ENCODE measurements at regions of chr19 and their contacts with region 1.

Region 1: DNA sequence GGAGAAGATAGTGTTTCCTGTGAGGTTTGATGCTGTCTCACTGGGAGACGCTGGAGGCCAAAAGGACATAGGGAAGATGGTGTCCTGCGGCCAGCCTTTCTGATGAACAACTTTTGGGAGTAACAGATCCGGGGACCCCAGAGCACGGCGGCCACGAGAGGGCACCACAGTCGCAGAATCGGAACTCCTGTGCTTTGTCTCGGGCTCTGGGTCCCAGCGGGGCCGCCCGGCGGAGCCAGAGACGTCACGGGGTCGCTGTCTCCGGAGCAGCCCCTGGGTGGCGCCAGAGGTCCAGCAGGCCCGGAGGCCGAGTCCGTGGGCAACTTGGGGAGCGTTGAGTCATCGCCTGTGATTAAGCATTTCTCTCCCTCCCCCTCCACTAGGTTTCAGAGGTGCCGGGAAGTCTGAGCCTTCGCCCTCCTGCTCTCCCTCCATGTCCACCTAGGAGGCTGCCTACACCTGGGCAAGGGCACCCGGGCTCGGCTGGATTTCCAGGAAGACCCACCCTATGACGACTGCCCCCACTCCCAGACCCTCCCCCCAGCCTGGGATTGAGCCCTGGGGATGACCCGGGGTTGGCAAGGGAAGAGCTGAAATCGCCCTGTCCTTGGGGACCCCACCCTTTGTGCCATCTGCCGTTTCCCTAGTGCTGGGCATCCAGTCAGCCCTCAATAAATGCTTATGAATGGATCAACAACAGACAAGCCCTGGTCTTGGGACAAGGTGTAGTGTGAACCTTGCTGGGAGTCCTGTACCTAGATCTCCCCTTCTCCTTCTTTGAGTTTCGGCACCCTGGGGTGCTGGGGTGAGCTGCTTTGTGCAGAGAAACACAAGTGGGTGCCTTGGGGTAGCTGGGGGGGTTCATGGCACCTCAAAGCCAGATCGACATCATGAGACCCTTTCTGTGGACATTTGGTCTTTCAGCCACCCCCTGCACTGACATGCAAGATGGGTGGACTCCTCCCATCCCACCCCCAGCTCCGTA is 3.4 kb downstream of the NANOS3 start:
- DNase-seq: peak; percentile 97
- H3K4me3 Mint-ChIP-seq: peak overlapping the region; percentile 66
- H3K27ac Mint-ChIP-seq: peak overlapping the region; percentile 89
- H3K4me1 Mint-ChIP-seq: peaks cover 27% of the 10 kb centered on the region
- H3K27me3 Mint-ChIP-seq: peaks cover 10% of the 10 kb centered on the region

Region 2: GRCh38 chr19:13905938-13906904 is 25.9 kb after region 1 on chr19 and contains the starts of genes BRME1 and CC2D1A:
- intact Hi-C with region 1: loop called (anchors 1 kb)
- DNase-seq: peak; percentile 93
- H3K4me3 Mint-ChIP-seq: peak within 1 kb of the TSS; percentile 86
- H3K27ac Mint-ChIP-seq: peak within 1 kb of the TSS; percentile 91
- H3K4me1 Mint-ChIP-seq: peaks cover 11% of the 10 kb centered on the region
- H3K27me3 Mint-ChIP-seq: no peaks in the 10 kb centered on the region
- total RNA-seq, gene BRME1: 16.6 and 20.5 TPM in 2 replicates
- total RNA-seq, gene CC2D1A: 43.9 and 45.6 TPM in 2 replicates

Region 3: GRCh38 chr19:13986348-13986904 is 106.1 kb after region 1 on chr19:
- intact Hi-C with region 1: loop called (anchors 1 kb)
- DNase-seq: peak; percentile 96
- H3K4me3 Mint-ChIP-seq: peak overlapping the region; percentile 56
- H3K27ac Mint-ChIP-seq: peak overlapping the region; percentile 88
- H3K4me1 Mint-ChIP-seq: peaks cover 48% of the 10 kb centered on the region
- H3K27me3 Mint-ChIP-seq: no peaks in the 10 kb centered on the region

Region 4: DNA sequence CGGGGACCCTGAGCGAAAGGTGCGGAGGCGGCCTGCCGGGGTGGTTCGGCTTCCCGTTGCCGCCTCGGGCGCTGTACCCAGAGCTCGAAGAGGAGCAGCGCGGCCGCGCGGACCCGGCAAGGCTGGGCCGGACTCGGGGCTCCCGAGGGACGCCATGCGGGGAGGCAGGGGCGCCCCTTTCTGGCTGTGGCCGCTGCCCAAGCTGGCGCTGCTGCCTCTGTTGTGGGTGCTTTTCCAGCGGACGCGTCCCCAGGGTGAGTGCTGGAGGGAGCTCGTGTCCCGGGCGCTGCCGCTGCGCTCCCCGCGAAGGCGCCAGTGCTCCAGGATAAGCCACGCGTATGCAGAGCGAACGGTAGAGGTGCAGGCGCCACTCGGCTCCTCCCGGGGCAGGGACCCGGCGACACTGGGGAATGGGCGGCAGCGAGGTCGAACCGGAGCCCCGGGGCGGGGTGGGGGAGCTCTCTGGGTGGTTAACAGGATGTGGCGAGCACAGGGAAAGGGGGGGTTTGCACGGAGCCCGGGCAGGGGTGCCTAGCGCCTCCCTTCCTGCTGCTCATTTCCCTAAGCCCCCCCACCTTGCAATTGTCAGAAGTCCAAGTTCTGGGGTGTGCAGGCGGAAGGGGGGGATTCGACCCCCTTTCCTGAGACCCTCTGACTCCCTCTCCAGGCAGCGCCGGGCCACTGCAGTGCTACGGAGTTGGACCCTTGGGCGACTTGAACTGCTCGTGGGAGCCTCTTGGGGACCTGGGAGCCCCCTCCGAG is 151.5 kb after region 1 on chr19 and contains the start of gene IL27RA:
- intact Hi-C with region 1: loop called (anchors 1 kb)
- DNase-seq: peak; percentile 78
- H3K4me3 Mint-ChIP-seq: peak within 1 kb of the TSS; percentile 95
- H3K27ac Mint-ChIP-seq: peak within 1 kb of the TSS; percentile 96
- H3K4me1 Mint-ChIP-seq: peaks cover 13% of the 10 kb centered on the region
- H3K27me3 Mint-ChIP-seq: peaks cover 3% of the 10 kb centered on the region
- total RNA-seq, gene IL27RA: 82.5 and 84.9 TPM in 2 replicates

Region 5: DNA sequence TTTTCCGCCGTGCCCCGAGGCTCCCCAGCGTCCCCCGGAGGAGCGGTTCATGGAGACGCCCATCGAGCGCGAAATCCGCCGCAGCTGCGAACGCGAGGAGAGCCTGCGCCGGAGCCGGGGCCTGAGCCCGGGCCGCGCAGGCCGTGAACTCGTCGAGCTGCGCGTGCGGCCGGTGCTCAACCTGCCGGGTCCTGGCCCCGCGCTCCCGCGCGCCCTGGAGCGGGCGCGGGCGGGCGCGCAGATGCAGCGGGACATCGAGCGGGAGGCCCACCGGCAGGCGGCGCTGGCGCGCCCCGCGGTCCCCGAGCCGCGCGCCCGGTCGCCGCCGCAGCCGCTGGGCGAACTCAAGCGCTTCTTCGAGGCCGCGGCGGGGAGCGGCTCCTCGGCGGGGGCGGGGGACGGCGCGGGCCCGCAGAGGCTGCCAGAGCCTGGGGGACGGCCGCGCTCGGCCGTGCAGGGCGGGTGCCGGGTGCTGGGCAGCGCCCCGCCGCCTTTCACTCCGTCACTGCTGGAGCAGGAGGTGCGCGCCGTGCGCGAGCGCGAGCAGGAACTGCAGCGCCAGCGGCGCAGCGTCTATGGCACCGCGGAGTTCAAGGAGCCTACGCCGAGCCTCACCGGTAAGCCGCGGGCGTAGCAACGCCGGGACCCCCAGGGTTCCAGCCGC is 193.0 kb after region 1 on chr19:
- intact Hi-C with region 1: loop called (anchors 1 kb)
- DNase-seq: peak; percentile 78
- H3K4me3 Mint-ChIP-seq: peak overlapping the region; percentile 97
- H3K27ac Mint-ChIP-seq: peak overlapping the region; percentile 98
- H3K4me1 Mint-ChIP-seq: peaks cover 16% of the 10 kb centered on the region
- H3K27me3 Mint-ChIP-seq: peaks cover 5% of the 10 kb centered on the region

Region 6: DNA sequence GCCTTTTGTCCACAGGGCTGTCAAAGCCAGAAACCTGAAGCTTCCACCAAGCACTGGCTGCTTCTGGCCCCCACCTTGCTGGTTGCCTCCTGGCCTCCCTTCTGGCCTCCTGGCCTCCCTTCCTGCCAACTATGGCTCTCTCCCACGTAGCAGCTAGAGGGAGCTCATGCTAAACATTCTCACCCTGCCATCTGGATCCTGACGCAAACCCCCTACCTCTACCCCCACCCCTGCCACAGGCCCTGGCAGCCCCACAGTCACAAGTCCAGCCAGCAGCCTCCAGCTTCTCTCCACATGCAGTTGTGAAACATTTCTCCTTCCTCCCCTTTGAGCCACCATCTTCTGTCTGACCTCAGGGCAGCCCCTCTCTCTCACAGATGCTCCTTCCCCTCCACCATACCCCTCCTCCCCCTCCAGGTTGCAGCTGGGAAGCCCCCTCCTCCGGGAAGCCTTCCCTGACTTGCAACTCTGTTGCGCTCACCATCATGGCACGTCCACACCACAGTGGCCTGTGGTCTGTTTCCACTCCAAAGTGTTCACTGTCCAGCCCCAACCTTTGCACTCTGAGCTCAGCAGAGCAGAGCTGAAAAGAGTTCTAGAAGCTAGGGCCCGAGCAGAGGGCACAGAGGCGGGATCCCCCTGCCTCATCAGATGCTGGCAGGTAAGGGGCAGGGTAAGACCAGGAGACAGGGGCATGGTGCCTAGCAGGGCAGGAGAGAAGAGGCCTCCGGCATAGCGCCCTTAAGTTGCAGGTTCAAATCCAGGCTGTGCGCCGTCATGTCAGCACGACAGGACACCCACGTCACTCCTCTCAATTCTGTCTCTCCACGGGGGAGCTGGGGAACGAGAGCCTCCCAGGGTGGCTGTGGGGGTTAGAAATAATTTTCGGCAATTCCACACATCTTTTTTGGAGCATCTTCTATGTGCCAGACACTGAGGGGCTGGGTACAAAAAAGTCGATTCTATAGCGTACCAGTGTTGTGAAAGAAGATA is 318.3 kb after region 1 on chr19:
- intact Hi-C with region 1: loop called (anchors 10 kb)
- DNase-seq: no peak
- H3K4me3 Mint-ChIP-seq: no peak overlapping the region
- H3K27ac Mint-ChIP-seq: no peak overlapping the region
- H3K4me1 Mint-ChIP-seq: peaks cover 31% of the 10 kb centered on the region
- H3K27me3 Mint-ChIP-seq: peaks cover 12% of the 10 kb centered on the region

Region 7: DNA sequence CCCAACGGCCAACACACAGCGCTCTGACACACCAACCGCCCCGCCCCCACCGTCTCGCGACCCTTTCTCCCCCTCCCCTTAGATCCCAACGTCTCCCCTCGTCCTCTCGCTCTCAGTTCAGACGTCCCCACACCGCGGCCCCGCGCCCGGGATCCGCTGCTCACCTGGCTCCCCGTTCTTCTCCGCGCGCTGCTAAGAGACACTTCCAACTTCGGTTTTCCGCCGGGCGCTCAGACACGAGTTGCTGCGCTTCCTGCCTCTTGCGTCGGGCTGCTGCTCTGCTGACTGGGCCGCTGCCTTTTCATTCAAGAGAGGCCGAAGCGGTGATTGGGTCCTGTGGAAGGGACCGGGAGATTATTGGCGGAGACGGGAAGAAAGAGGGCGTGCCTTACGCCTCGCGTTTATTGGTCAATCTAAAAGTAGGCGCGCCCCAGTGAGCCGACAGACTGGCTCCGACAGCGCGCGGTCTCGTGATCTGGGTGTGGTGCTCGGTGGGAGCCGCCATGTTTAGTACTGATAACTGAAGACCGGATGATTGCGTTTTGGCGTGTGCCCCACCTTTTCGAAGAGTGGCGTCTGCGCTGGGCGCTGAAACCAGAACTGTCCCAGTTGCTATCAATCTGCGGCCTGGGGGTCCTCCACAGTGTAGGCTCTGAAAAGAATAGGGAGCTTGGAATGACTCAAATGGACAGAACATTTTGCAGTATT is 538.9 kb after region 1 on chr19 and contains the start of gene DDX39A:
- intact Hi-C with region 1: loop called (anchors 2 kb)
- DNase-seq: peak; percentile 98
- H3K4me3 Mint-ChIP-seq: peak within 1 kb of the TSS; percentile 98
- H3K27ac Mint-ChIP-seq: peak within 1 kb of the TSS; percentile 100
- H3K4me1 Mint-ChIP-seq: peaks cover 29% of the 10 kb centered on the region
- H3K27me3 Mint-ChIP-seq: no peaks in the 10 kb centered on the region
- total RNA-seq, gene DDX39A: 273 and 287 TPM in 2 replicates

Measured in activated T-helper 1 cell treated with anti-CD3 and anti-CD28 coated beads, Interleukin-12 subunit alpha, Interleukin-12 subunit beta, Interleukin-2, Interleukin-4 antibody, amounts not matched to agents 30 ng/mL and 10 ng/mL and 1 ng/mL, durations not matched to agents 14 hours and 24 hours and 36 hours (primary cell).